K562 (cell line): ENCODE measurements at regions of chr10 and their contacts with region 1.

Region 1: GRCh38 chr10:102322914-102323313 is 72.6 kb upstream of the NFKB2 start:
- DNase-seq: no peak
- ATAC-seq: no peak
- H3K4me3 ChIP-seq: no peak overlapping the region
- H3K27ac ChIP-seq: no peak overlapping the region
- H3K4me1 ChIP-seq: no peaks in the 10 kb centered on the region; a peak in 2 of 5 replicates
- H3K27me3 ChIP-seq: no peaks in the 10 kb centered on the region
- CTCF ChIP-seq: no peak
- EP300 ChIP-seq: no peak
- POLR2A ChIP-seq: no peak
- RAD21 ChIP-seq: no peak

Region 2: DNA sequence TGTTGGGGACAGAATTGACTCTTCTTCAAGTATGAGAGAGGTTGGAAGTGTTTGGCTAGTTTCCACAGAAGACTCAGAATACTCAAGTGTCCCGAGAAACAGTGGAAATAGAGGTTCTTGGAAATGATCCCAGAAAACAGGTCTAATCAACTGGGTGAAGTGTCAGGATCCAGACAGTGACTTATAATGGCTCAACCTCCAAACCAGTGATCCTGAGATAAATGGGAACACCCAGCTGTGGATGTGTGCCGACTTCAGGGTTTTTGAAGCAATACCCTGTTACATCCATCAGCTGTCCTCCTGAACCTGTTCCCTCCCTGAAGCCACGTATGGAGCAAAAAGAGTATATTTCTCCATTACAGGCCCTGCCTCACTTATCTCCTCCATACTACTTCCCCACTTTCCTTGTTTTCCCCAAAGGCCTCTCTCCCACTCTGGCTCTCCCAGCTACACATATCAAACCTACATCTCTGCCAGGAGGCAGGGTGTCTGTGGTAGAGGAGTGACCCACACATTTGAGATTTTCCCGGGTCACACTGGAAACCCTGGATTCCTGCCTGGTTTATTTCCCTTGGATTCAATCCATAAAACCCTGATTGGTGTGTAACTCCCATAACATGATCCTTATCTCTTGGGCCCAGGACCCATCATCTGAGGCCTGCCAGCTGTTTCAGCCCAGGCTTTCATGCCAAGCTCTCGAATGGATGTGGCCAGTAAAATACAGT is 114.4 kb before region 1 on chr10:
- CTCF ChIA-PET with region 1: no interaction called
- POLR2A ChIA-PET with region 1: no interaction called
- in situ Hi-C with region 1: no loop called
- intact Hi-C with region 1: no loop called
- DNase-seq: no peak
- ATAC-seq: no peak
- H3K4me3 ChIP-seq: no peak overlapping the region
- H3K27ac ChIP-seq: no peak overlapping the region
- H3K4me1 ChIP-seq: no peaks in the 10 kb centered on the region
- H3K27me3 ChIP-seq: peaks cover 0 to 6% of the 10 kb centered on the region in 2 experiments; a peak in 1 of 5 replicates
- CTCF ChIP-seq: no peak
- EP300 ChIP-seq: no peak
- POLR2A ChIP-seq: no peak
- RAD21 ChIP-seq: no peak

Region 3: GRCh38 chr10:102280397-102281101 is 42.4 kb before region 1 on chr10:
- CTCF ChIA-PET with region 1: no interaction called
- POLR2A ChIA-PET with region 1: no interaction called
- in situ Hi-C with region 1: no loop called
- intact Hi-C with region 1: loop called (anchors 1 kb)
- DNase-seq: no peak
- ATAC-seq: peak; percentile 59
- H3K4me3 ChIP-seq: no peak overlapping the region
- H3K27ac ChIP-seq: no peak overlapping the region
- H3K4me1 ChIP-seq: peaks cover 0 to 17% of the 10 kb centered on the region in 2 experiments; a peak in 2 of 5 replicates
- H3K27me3 ChIP-seq: no peaks in the 10 kb centered on the region
- CTCF ChIP-seq: no peak
- EP300 ChIP-seq: no peak
- POLR2A ChIP-seq: no peak
- RAD21 ChIP-seq: no peak